Mammary epithelial cell (primary cell): ENCODE measurements at regions of chr15 and their contacts with region 1.

Region 1: DNA sequence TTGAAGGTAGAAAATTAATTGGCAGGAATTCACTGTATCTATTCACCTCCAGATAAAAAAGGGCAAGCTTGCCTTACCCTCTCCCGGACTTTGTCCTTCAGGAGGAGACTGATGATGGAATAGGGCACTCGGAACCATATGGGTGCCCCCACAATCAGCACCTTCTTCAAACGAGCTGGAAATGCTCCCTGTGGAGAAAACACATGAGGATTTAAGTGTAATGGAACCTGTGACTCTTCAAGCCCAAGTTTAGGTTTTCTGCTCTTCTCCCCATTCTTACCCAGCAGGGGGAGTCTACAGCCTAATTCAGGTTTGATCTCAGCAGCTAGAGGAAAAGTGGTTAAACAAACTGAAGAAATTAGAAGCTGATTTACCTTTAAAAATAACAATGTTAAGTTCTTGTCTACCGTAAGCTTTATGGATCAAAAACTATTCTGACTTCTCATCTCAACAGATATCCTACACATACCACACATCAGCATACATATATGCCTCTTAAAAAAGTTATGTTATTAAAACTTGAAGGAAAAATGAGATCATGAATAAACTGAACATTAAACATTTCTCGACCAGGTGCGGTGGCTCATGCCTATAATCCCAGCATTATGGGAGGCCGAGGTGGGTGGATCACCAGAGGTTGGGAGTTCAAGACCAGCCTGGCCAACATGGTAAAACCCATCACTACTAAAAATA is 57.5 kb upstream of the SIN3A start:
- DNase-seq: peak; percentile 13
- H3K4me3 ChIP-seq: no peak overlapping the region
- H3K27ac ChIP-seq: no peak overlapping the region
- H3K4me1 ChIP-seq: no peaks in the 10 kb centered on the region
- H3K27me3 ChIP-seq: no peaks in the 10 kb centered on the region
- CTCF ChIP-seq: peak; percentile 32 to 56

Region 2: DNA sequence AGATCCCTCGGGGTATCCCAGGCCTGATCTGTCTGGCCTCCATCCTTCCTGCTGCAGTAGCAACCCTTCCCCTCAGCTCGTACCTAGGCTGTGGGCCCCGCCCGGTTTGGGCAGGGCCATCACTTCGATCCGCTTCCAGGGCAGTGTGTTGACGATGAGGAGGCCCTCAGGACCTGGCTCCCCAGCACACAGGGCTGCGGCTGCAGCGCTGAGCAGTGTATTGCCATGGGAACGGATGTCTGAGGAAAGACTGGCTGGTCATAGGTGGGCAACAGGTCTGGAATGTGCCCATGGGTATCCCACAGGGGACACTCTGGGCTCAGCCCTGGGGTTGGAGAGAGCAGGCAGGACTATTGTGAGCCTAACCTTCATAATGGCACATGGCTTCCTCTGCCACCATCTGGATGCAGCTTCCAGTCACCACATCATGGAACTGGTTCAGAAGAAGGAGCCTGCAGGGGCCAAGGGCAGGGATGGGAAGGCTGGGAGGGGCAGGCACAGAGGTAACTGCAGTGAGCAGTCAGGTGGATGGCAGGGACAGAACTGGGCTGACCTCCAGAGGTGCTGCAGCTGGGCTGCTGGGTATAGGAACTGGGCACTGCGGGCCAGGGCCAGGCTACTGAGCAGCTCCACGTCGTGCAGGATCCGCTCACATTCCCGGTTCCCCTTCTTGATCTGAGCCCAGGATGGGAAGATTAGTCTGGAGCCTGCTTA is 149.3 kb before region 1 on chr15:
- CTCF ChIA-PET with region 1: no interaction called
- dilution Hi-C with region 1: no loop called
- in situ Hi-C with region 1: no loop called
- intact Hi-C with region 1: no loop called
- DNase-seq: no peak
- H3K4me3 ChIP-seq: no peak overlapping the region
- H3K27ac ChIP-seq: no peak overlapping the region
- H3K4me1 ChIP-seq: no peaks in the 10 kb centered on the region
- H3K27me3 ChIP-seq: no peaks in the 10 kb centered on the region
- CTCF ChIP-seq: no peak

Region 3: DNA sequence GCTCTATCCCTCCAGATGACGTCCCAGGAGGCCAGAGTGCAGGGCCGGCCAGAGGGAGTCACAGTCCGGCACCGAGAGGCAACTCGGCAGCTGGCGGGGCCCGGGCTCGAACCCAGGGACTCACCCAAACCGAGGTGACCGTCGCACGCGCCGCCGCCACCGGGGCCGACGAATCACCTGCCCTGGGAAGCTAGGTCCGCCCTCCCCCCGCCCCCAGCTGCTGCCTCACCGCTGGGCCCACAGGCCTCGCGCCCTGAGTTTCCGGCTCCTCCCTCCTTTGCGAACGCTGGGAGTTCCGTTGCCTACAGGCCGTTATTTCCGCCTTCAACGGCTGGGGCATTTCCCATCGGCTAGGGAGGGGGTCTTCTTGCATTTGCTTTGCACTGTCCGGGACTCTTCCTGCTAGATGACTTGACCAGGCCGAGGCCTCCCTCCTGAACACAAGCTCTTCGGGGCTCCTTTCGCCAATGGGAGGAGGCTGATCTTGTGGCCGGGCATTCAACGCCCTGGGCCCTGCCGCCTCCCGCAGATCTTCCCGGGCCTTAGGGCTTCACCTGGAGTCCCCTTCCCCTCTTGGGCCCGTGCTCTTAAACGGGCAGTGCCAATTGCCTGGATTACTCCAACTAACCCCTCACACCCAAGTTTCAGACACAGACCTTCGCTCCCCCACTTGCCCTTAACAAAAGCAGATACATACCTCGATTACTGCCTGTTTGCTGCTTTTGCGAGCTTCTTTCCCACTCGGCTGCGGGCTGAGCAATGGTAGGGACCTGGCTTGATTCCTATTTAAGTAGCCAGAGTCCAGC is 116.8 kb after region 1 on chr15 and contains the start of gene SNUPN:
- CTCF ChIA-PET with region 1: no interaction called
- dilution Hi-C with region 1: no loop called
- in situ Hi-C with region 1: no loop called
- intact Hi-C with region 1: loop called (anchors 5 kb)
- DNase-seq: peak; percentile 87
- H3K4me3 ChIP-seq: peak within 1 kb of the TSS; percentile 65 to 100 (median 96)
- H3K27ac ChIP-seq: peak within 1 kb of the TSS; percentile 82
- H3K4me1 ChIP-seq: peaks cover 26% of the 10 kb centered on the region
- H3K27me3 ChIP-seq: no peaks in the 10 kb centered on the region
- CTCF ChIP-seq: no peak
- total RNA-seq, gene SNUPN: 16.5 to 21.5 TPM